ENCODE measurements at regions of chr10 and their contacts with region 1.

Region 1: DNA sequence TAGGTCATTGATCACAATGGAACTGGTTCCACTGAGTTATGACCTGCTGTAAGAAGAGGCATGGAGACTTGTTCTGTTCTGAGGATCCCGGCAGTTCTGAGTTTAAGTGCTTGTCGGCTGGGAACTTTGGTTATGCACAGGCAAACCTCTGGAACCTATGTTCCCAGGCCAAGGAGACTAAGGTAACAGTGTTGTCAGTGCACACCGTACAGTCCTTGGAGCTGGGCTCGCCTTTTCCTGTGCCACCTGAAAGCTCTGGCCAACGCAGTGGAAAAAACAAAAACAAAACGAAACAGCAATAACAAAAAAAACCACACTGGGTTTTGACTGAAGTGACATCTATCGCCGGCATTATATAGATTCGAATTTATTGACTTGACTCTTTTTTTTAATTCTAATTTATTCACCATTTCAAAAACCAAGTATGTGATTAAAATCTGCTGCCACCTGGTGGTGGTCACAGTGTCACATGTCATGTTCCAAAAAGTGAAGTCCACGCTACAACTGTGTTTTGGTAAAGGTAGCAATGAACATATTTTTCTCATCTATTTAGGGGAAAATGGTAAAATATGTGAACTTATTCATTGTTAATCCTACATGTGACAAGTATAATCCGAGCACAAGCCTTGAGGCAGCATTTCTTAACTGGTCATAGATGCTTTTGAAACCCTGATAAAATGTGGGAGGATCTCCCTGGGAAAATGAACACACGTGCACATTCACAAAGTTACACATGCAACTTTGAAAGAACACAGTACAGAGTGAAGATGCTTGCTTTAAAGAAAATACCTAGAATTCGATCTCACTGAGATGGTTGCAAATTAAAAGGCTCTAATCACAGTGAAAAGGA is 113.8 kb upstream of the PPP2R2D start:
- DNase-seq: no peak
- ATAC-seq: no peak
- H3K4me3 ChIP-seq: no peak overlapping the region
- H3K27ac ChIP-seq: no peak overlapping the region
- H3K4me1 ChIP-seq: no peaks in the 10 kb centered on the region
- H3K27me3 ChIP-seq: 0 out of 5 replicates have a peak, but pooled peaks cover 0 to 2% of the 10 kb centered on the region in 2 experiments
- CTCF ChIP-seq: peak; percentile 58
- EP300 ChIP-seq: no peak
- POLR2A ChIP-seq: no peak
- RAD21 ChIP-seq: no peak

Region 2: GRCh38 chr10:131453594-131454355 is 333.2 kb before region 1 on chr10:
- CTCF ChIA-PET with region 1: interaction called, 7 read pairs
- POLR2A ChIA-PET with region 1: no interaction called
- in situ Hi-C with region 1: loop called (anchors 10 kb)
- intact Hi-C with region 1: no loop called
- DNase-seq: peak; percentile 12
- ATAC-seq: peak; percentile 59; the same call in 2 of the 3 replicates
- H3K4me3 ChIP-seq: no peak overlapping the region
- H3K27ac ChIP-seq: no peak overlapping the region
- H3K4me1 ChIP-seq: no peaks in the 10 kb centered on the region
- H3K27me3 ChIP-seq: peaks cover 0 to 31% of the 10 kb centered on the region in 2 experiments; a peak in 4 of 5 replicates
- CTCF ChIP-seq: peak; percentile 69
- EP300 ChIP-seq: no peak
- POLR2A ChIP-seq: no peak
- RAD21 ChIP-seq: no peak